Brain microvascular endothelial cell (primary cell): ENCODE measurements at regions of chr3 and their contacts with region 1.

Region 1: GRCh38 chr3:183385698-183386613 is 42.5 kb downstream of the MCF2L2 start:
- DNase-seq: peak; percentile 72
- H3K4me3 ChIP-seq: no peak overlapping the region
- H3K27ac ChIP-seq: no peak overlapping the region
- H3K27me3 ChIP-seq: no peaks in the 10 kb centered on the region
- CTCF ChIP-seq: peak; percentile 78

Region 2: GRCh38 chr3:183122257-183122932 is 263.6 kb before region 1 on chr3:
- in situ Hi-C with region 1: loop called (anchors 25 kb)
- DNase-seq: peak; percentile 59
- H3K4me3 ChIP-seq: no peak overlapping the region
- H3K27ac ChIP-seq: no peak overlapping the region
- H3K27me3 ChIP-seq: no peaks in the 10 kb centered on the region
- CTCF ChIP-seq: peak; percentile 62

Region 3: GRCh38 chr3:183812761-183813445 is 426.9 kb after region 1 on chr3:
- in situ Hi-C with region 1: no loop called
- DNase-seq: no peak
- H3K4me3 ChIP-seq: no peak overlapping the region
- H3K27ac ChIP-seq: no peak overlapping the region
- H3K27me3 ChIP-seq: no peaks in the 10 kb centered on the region
- CTCF ChIP-seq: no peak